ENCODE measurements at regions of chr19 and their contacts with region 1.

Region 1: GRCh38 chr19:2213799-2214198 is 22.3 kb downstream of the PLEKHJ1 start:
- DNase-seq: no peak
- H3K4me3 ChIP-seq: no peak overlapping the region
- CTCF ChIP-seq: no peak

Region 2: DNA sequence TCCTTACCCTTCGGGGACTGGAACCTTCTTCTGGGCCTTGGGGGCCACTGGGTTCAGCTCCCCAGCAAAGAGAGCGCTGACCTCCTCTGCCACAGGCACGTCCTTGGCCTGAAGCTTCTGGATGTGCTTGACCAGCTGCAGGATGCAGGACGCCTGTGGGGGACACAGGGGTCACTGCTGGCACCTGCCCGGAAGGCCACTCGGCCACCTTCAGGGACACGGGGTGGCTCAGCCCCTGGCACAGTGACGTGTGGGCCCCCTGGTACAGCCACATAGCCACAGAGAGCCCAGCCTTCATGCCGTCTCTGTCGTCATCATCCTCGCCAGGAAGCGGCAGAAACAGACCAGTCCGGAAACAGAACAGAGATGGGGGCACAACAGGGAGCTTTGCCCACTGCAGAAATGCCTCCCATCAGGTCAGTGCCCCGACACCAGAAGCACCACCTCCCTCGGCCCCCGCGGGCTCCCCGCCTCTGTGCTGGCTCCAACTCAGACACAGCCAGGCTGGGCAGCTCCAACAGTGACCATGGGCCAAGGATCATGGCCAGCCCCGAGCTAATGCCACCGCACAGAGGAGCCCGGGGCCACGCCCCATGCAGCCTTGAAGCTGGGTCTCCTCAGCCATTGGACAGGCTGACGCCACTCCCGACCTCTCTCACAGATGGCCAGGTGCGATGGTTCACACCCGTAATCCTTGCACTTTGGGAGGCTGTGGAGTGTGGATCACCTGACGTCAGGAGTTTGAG is 96.4 kb before region 1 on chr19:
- in situ Hi-C with region 1: loop called (anchors 5 kb)
- DNase-seq: no peak
- H3K4me3 ChIP-seq: no peak overlapping the region
- CTCF ChIP-seq: no peak

Measured in astrocyte of the cerebellum (primary cell).